Ascending aorta (tissue), 2 donors: ENCODE measurements at regions of chr6 and their contacts with region 1.

Region 1: DNA sequence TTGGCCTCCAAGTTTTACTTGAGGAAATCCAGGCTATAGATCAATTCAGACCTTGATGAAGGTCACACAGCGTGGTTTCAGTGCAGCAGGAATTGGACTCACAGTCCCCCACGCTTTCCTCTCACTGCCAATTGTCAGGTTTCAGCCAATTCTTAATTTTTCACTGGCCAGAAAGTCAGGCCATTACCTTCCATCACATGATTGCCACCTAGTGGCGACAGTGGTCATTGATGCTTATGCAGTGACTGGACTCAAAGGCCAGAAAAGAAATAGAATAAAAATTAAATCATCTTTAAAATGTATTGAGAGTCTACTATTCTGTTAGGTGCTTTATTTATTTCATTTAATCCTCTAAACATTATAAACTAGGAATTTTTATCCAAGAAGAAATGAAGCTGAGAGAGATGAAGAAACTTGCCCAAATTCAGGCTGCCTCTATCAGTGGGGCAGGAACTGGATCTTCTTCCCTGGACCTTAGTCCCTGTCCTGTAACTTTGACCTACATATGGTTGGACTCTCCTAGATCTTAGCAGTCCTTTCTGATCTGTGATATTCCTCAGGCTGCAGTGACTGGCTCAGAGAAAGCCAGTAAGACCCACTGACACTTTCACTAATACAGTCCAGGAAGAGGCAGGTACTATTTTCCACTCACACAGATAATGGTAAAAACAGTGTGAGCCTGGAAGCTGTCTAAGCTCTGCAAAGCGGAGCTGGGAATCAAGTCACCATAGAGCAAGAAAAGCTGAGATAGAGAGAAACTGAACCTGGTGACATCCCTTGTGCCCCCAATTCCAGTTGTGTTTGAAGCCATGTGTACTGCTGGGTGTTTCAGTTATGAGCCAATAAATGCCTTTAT is 133.3 kb downstream of the ELOVL4 start:
- DNase-seq: peak in 1 of 2 donors; percentile 83
- H3K4me3 ChIP-seq: no peak overlapping the region
- H3K27ac ChIP-seq: no peak overlapping the region
- H3K4me1 ChIP-seq: no peaks in the 10 kb centered on the region
- H3K27me3 ChIP-seq: no peaks in the 10 kb centered on the region
- CTCF ChIP-seq: peak; percentile 39 to 77 (median 69)

Region 2: GRCh38 chr6:79570129-79571029 is 243.7 kb before region 1 on chr6:
- intact Hi-C with region 1: loop called (anchors 10 kb)
- DNase-seq: no peak
- H3K4me3 ChIP-seq: peak overlapping the region in 1 of 2 donors; percentile 34
- H3K27ac ChIP-seq: no peak overlapping the region
- H3K4me1 ChIP-seq: no peaks in the 10 kb centered on the region
- H3K27me3 ChIP-seq: no peaks in the 10 kb centered on the region
- CTCF ChIP-seq: peak in 2 of 3 experiments; percentile 55 to 60

Region 3: GRCh38 chr6:79797912-79798311 is 16.2 kb before region 1 on chr6:
- intact Hi-C with region 1: no loop called
- DNase-seq: no peak
- H3K4me3 ChIP-seq: no peak overlapping the region
- H3K27ac ChIP-seq: no peak overlapping the region
- H3K4me1 ChIP-seq: no peaks in the 10 kb centered on the region
- H3K27me3 ChIP-seq: no peaks in the 10 kb centered on the region
- CTCF ChIP-seq: no peak

Region 4: DNA sequence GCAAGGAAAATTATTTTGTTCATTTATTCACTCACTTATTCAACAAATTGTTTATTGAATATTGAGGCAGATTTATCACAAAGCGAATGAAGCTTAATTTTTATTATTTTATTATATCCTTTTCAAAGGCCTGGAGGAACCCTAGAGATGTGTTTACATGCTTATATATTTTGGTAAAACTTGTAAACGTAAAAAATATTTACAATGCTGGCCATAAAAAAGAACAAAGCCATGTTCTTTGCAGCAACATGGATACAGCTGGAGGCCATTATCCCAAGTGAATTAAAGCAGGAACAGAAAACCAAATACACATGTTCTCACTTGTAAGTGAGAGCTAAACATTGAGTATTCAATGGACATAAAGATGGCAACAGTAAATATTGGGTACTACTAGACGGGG is 74.5 kb after region 1 on chr6:
- intact Hi-C with region 1: no loop called
- DNase-seq: no peak
- H3K4me3 ChIP-seq: no peak overlapping the region
- H3K27ac ChIP-seq: no peak overlapping the region
- H3K4me1 ChIP-seq: no peaks in the 10 kb centered on the region
- H3K27me3 ChIP-seq: no peaks in the 10 kb centered on the region
- CTCF ChIP-seq: no peak